Activated B cell treated with CpG ODN at 0.5 μM for 24 hours (primary cell): ENCODE measurements at regions of chr12 and their contacts with region 1.

Region 1: GRCh38 chr12:40224439-40225291 is at the start of gene LRRK2:
- DNase-seq: peak; percentile 90
- ATAC-seq: peak; percentile 82
- H3K4me3 Mint-ChIP-seq: peak within 1 kb of the TSS; percentile 91
- H3K27ac Mint-ChIP-seq: peak within 1 kb of the TSS; percentile 96
- H3K4me1 Mint-ChIP-seq: peaks cover 61% of the 10 kb centered on the region
- H3K27me3 Mint-ChIP-seq: no peaks in the 10 kb centered on the region
- CTCF ChIP-seq: no peak
- total RNA-seq, gene LRRK2: 59.9 and 71.7 TPM in 2 replicates

Region 2: GRCh38 chr12:40152783-40153383 is 71.8 kb before region 1 on chr12:
- CTCF ChIA-PET with region 1: interaction called, 9 read pairs
- POLR2A ChIA-PET with region 1: interaction called, 105 read pairs
- intact Hi-C with region 1: loop called (anchors 1 kb)
- DNase-seq: peak; percentile 33
- ATAC-seq: peak; percentile 56
- H3K4me3 Mint-ChIP-seq: no peak overlapping the region
- H3K27ac Mint-ChIP-seq: peak overlapping the region; percentile 3
- H3K4me1 Mint-ChIP-seq: peaks cover 52% of the 10 kb centered on the region
- H3K27me3 Mint-ChIP-seq: no peaks in the 10 kb centered on the region
- CTCF ChIP-seq: peak; percentile 58

Region 3: DNA sequence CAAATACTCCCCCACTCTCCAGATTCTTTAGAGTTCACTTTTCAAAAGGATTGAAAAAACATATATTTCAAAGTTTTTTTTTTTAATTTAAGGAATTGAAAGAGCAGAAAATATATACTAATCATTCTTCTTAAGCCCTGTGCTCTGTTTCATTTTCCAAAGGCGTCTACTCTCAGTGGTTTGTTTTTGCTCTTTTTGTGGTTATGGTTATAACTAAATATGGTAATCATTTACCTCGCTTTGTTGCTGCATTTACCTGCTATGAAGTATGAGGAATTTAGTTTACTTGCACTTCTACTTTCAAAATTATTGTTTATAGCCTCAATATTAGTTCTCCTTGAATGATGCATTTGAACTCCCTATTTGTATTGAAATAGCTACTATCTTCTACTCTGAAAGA is 55.8 kb before region 1 on chr12:
- CTCF ChIA-PET with region 1: interaction called, 3 read pairs
- POLR2A ChIA-PET with region 1: interaction called, 19 read pairs
- intact Hi-C with region 1: loop called (anchors 1 kb)
- DNase-seq: no peak
- ATAC-seq: peak; percentile 77
- H3K4me3 Mint-ChIP-seq: peak overlapping the region; percentile 70
- H3K27ac Mint-ChIP-seq: peak overlapping the region; percentile 82
- H3K4me1 Mint-ChIP-seq: peaks cover 34% of the 10 kb centered on the region
- H3K27me3 Mint-ChIP-seq: no peaks in the 10 kb centered on the region
- CTCF ChIP-seq: no peak

Region 4: GRCh38 chr12:40202095-40203059 is 22.3 kb before region 1 on chr12:
- CTCF ChIA-PET with region 1: interaction called, 3 read pairs
- POLR2A ChIA-PET with region 1: interaction called, 82 read pairs
- intact Hi-C with region 1: no loop called
- DNase-seq: no peak
- ATAC-seq: peak; percentile 47
- H3K4me3 Mint-ChIP-seq: peak overlapping the region; percentile 35
- H3K27ac Mint-ChIP-seq: peak overlapping the region; percentile 78
- H3K4me1 Mint-ChIP-seq: peaks cover 31% of the 10 kb centered on the region
- H3K27me3 Mint-ChIP-seq: no peaks in the 10 kb centered on the region
- CTCF ChIP-seq: no peak

Region 5: DNA sequence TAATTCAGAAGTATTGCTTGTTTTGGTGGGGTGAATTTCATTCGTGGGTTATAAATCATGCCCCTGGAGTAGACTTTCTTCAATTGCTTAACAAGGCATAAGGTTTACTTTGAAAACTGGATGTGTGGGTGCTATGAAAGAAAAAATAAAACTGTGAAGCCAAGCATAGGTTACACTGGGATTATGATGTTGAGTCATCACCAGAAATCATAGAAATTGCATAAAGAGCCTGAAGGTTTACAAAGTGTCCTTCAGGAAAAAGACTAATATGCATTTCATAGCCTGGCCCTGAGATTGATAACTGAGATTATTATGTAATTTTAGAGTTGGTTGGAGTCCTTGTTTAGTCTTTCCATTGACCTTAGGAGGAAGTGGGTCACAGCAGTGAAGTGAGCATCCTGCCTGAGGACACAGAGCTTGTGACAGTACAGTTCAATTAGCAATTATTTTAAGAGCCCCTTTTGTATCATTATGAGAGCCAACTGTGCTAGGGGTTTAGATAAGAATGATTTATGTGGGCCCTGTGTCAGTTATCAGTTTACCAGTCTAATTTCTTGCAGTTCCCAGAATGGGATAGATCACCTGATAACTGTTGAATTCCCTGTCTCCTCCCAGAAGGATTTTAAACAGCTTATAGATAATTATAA is 13.7 kb after region 1 on chr12:
- CTCF ChIA-PET with region 1: interaction called, 3 read pairs
- POLR2A ChIA-PET with region 1: interaction called, 20 read pairs
- intact Hi-C with region 1: no loop called
- DNase-seq: no peak
- ATAC-seq: no peak
- H3K4me3 Mint-ChIP-seq: no peak overlapping the region
- H3K27ac Mint-ChIP-seq: peak overlapping the region; percentile 53
- H3K4me1 Mint-ChIP-seq: peaks cover 61% of the 10 kb centered on the region
- H3K27me3 Mint-ChIP-seq: no peaks in the 10 kb centered on the region
- CTCF ChIP-seq: no peak

Region 6: DNA sequence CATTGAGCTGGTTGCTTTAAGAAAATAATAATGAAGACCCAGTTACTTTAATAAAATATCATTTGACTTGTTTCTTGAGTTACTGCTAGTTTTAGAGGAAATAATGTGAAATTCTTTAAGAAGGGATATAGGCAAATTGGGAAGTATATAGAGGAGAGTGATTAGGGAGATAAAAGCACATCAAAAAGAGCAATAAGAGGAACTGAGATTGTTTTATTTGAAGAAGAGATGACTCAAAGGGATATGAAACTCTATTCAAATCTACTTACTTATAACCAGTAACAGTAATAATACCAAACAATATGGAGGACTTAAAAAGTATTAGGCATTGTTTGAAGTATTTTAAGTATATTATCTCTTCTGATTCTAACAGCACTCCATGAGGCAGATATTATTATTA is 37.3 kb after region 1 on chr12:
- CTCF ChIA-PET with region 1: interaction called, 4 read pairs
- POLR2A ChIA-PET with region 1: interaction called, 50 read pairs
- intact Hi-C with region 1: loop called (anchors 1 kb)
- DNase-seq: no peak
- ATAC-seq: peak; percentile 73
- H3K4me3 Mint-ChIP-seq: peak overlapping the region; percentile 75
- H3K27ac Mint-ChIP-seq: peak overlapping the region; percentile 92
- H3K4me1 Mint-ChIP-seq: peaks cover 41% of the 10 kb centered on the region
- H3K27me3 Mint-ChIP-seq: no peaks in the 10 kb centered on the region
- CTCF ChIP-seq: no peak